Natural killer cell (primary cell): ENCODE measurements at regions of chr2 and their contacts with region 1.

Region 1: DNA sequence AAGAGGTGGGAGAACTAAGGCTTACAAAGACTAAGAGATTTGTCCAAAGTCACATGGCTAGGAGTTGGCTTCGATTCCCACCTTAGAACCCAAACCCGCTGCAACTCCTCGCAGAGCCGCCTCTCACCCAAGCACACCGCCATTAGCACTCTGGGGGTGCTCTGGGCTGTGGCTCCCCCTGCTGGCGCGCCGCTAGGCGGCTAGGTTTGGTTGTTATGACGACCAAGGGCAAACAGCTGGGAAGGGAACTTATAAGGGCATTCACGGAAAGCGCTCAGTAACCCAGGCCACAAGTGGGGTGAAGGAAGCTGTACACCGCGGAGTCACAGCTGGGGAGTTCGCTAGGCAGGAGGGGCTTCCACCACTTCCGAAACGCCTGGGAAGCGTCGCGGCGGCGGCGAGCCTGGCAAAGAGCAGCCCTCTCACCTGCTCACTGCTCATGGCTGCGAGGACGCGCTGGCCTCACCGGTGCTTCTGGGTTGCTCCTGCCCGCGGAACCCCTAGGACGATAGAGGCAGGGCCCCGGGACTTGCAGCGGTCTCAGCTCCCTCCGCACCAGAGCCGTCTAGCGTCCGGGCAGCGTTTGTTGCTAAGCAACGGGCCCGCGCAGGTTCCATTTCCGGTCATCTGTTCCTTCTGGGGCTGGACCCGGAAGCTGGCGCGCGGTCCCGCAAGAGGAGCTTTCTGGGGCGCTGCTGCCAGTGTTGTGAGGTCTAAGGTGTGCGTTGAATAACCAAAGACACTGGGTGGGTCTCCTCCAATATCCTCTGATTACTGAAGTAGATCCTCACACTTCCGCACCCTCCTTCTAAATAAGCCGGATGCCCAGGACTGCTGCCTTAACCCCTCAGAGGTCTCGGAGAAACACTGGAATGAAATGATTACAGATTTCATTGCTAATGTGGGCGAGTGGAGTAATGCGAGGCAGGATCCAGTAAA is at the start of gene DNAH7:
- DNase-seq: peak; percentile 87 to 95
- ATAC-seq: peak; percentile 87 to 96 (median 92)
- H3K4me3 ChIP-seq: peak within 1 kb of the TSS; percentile 50
- H3K4me3 Mint-ChIP-seq: peak within 1 kb of the TSS; percentile 89
- H3K27ac ChIP-seq: peak within 1 kb of the TSS; percentile 61
- H3K27ac Mint-ChIP-seq: peak within 1 kb of the TSS; percentile 70 to 87
- H3K4me1 ChIP-seq: peaks cover 12% of the 10 kb centered on the region
- H3K4me1 Mint-ChIP-seq: peaks cover 11 to 16% of the 10 kb centered on the region in 2 donors
- H3K27me3 ChIP-seq: no peaks in the 10 kb centered on the region
- H3K27me3 Mint-ChIP-seq: no peaks in the 10 kb centered on the region
- CTCF ChIP-seq: peak; percentile 76
- total RNA-seq, gene DNAH7: 0.07 to 0.20 TPM in 2 of 3 donors, not detected in the other

Region 2: DNA sequence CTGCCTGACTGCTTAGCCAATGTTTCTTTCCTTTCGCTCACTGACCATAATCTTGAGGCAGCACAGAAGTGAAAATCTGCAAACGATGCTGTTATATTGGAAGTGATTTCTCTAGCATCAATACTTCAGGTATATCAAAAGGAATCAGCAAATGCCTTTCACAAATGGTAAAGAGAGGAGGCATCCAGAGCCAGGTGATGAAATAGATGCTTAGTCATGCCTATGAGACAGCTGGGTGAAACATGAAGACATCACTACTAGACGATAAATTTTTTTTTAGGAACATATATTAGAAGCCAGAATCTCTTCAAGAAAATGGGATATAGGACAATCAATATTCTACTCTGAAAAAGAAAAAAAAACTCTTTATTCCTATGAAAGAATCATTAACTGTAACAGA is 660.8 kb before region 1 on chr2:
- intact Hi-C with region 1: loop called (anchors 5 kb)
- DNase-seq: no peak
- ATAC-seq: no peak
- H3K4me3 ChIP-seq: no peak overlapping the region
- H3K4me3 Mint-ChIP-seq: no peak overlapping the region
- H3K27ac ChIP-seq: no peak overlapping the region
- H3K27ac Mint-ChIP-seq: no peak overlapping the region
- H3K4me1 ChIP-seq: no peaks in the 10 kb centered on the region
- H3K4me1 Mint-ChIP-seq: no peaks in the 10 kb centered on the region
- H3K27me3 ChIP-seq: no peaks in the 10 kb centered on the region
- H3K27me3 Mint-ChIP-seq: no peaks in the 10 kb centered on the region
- CTCF ChIP-seq: no peak

Region 3: DNA sequence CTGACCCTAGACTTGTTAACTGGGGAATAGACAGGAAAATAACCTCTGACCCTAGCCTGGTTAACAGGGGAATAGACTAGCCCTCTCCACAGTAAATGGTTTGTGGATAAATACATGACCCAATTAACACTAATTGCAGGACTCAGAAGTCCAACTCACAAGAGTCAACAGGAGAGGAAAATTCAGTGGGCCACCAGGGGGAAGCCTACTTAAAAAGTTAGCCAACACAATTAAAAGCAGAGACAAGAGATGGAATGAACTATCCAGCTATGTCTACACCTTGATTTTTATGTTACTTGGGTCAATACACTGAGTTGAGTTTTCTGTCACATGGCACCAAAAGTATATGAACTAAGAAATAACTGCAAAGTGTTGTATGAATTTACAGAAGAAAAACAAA is 570.4 kb before region 1 on chr2:
- intact Hi-C with region 1: loop called (anchors 10 kb)
- DNase-seq: peak; percentile 34 to 78
- ATAC-seq: peak in 2 of 3 donors; percentile 69 to 70
- H3K4me3 ChIP-seq: no peak overlapping the region
- H3K4me3 Mint-ChIP-seq: no peak overlapping the region
- H3K27ac ChIP-seq: no peak overlapping the region
- H3K27ac Mint-ChIP-seq: no peak overlapping the region
- H3K4me1 ChIP-seq: peaks cover 2% of the 10 kb centered on the region
- H3K4me1 Mint-ChIP-seq: peaks cover 11 to 13% of the 10 kb centered on the region in 2 donors
- H3K27me3 ChIP-seq: no peaks in the 10 kb centered on the region
- H3K27me3 Mint-ChIP-seq: peaks cover 8 to 9% of the 10 kb centered on the region in 2 donors
- CTCF ChIP-seq: peak; percentile 48